ENCODE measurements at regions of chr17 and their contacts with region 1.

Region 1: GRCh38 chr17:79393358-79394202 is 217.3 kb downstream of the RBFOX3 start:
- DNase-seq: peak; percentile 37
- ATAC-seq: peak; percentile 84
- H3K4me3 ChIP-seq: no peak overlapping the region
- H3K27ac ChIP-seq: no peak overlapping the region
- H3K4me1 ChIP-seq: peaks cover 0 to 8% of the 10 kb centered on the region in 2 experiments; a peak in 1 of 4 replicates
- H3K27me3 ChIP-seq: peaks cover 53% of the 10 kb centered on the region
- CTCF ChIP-seq: peak; percentile 92 to 100 (median 99)
- POLR2A ChIP-seq: no peak
- RAD21 ChIP-seq: peak; percentile 94

Region 2: DNA sequence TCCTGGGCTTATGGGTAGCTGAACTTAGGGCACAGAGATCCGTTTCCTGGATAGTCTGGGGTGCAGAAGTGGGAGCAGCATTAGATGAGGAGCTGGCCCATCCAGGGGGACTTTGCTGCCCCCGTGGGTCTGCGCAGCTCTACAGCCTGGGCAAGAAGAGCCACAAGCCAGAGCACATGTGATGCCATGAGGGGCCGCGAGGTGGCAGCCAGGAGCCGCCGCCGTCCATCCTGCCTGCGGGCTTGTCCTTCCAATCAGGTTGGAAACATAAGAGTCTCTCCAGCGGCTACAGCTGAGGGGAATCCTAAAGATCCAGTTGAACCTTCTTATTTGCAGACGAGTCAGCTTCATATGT is 347.8 kb before region 1 on chr17:
- CTCF ChIA-PET with region 1: interaction called, 33 read pairs
- POLR2A ChIA-PET with region 1: no interaction called
- RAD21 ChIA-PET with region 1: interaction called in 1 of 2 experiments, 3 read pairs
- intact Hi-C with region 1: no loop called
- DNase-seq: peak; percentile 54
- ATAC-seq: peak; percentile 89
- H3K4me3 ChIP-seq: no peak overlapping the region
- H3K27ac ChIP-seq: no peak overlapping the region
- H3K4me1 ChIP-seq: peaks cover 0 to 13% of the 10 kb centered on the region in 2 experiments; a peak in 3 of 4 replicates
- H3K27me3 ChIP-seq: no peaks in the 10 kb centered on the region
- CTCF ChIP-seq: peak; percentile 93 to 99 (median 99)
- POLR2A ChIP-seq: no peak
- RAD21 ChIP-seq: peak; percentile 88

Region 3: DNA sequence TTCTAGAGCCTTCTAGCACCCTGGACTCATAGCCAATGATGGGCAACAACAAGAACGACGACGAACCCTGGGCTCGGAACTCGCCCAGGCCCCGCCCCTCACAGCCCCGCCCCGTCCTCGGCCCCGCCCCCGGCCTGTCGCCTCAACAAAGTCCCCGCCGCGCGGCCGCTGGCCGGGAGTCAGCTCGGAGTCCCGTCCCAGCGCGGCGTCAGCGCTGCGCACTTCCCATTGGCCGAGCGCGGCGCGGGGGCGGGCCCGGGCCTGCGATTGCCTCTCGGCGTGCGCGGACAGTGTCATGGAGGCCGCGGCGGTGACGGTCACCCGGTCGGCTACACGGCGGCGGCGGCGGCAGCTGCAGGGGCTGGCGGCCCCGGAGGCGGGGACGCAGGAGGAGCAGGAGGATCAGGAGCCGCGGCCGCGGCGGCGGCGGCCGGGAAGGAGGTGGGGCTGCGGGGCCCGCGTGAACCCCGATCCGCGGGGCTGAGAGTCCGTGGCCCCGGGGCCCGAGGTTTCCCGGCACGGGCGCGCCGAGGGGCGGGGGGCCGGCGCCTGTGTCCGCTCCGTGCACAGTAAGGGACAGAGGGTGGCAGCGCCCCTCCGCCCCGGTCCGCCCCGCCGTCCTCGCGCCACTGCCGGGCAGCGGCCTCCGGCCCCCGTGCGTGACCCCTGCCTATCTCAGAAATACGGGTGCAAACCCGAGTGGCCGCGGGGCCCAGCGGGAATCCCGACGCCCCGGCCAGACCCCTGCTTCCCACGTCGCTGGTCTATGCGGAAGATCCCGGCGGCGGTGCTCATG is 318.7 kb before region 1 on chr17 and contains the start of gene ENGASE:
- CTCF ChIA-PET with region 1: interaction called, 14 read pairs
- POLR2A ChIA-PET with region 1: no interaction called
- RAD21 ChIA-PET with region 1: interaction called in 1 of 2 experiments, 3 read pairs
- intact Hi-C with region 1: no loop called
- DNase-seq: peak; percentile 92
- ATAC-seq: peak; percentile 99
- H3K4me3 ChIP-seq: peak within 1 kb of the TSS; percentile 78 to 91
- H3K27ac ChIP-seq: peak within 1 kb of the TSS; percentile 67
- H3K4me1 ChIP-seq: peaks cover 10 to 22% of the 10 kb centered on the region in 2 experiments; a peak in 3 of 4 replicates
- H3K27me3 ChIP-seq: no peaks in the 10 kb centered on the region
- CTCF ChIP-seq: no peak
- POLR2A ChIP-seq: peak; percentile 38
- RAD21 ChIP-seq: no peak
- total RNA-seq, gene ENGASE: 54.2 TPM

Region 4: GRCh38 chr17:79188048-79188447 is 205.5 kb before region 1 on chr17:
- CTCF ChIA-PET with region 1: interaction called, 116 read pairs
- POLR2A ChIA-PET with region 1: interaction called, 3 read pairs
- RAD21 ChIA-PET with region 1: interaction called, 5 to 17 read pairs
- intact Hi-C with region 1: loop called (anchors 1 kb)
- DNase-seq: peak; percentile 10
- ATAC-seq: peak; percentile 88
- H3K4me3 ChIP-seq: no peak overlapping the region
- H3K27ac ChIP-seq: no peak overlapping the region
- H3K4me1 ChIP-seq: no peaks in the 10 kb centered on the region
- H3K27me3 ChIP-seq: peaks cover 84% of the 10 kb centered on the region
- CTCF ChIP-seq: peak; percentile 81 to 92 (median 89)
- POLR2A ChIP-seq: no peak
- RAD21 ChIP-seq: peak; percentile 91

Region 5: GRCh38 chr17:79372470-79373238 is 20.9 kb before region 1 on chr17:
- CTCF ChIA-PET with region 1: interaction called, 13 read pairs
- POLR2A ChIA-PET with region 1: no interaction called
- RAD21 ChIA-PET with region 1: no interaction called
- intact Hi-C with region 1: no loop called
- DNase-seq: no peak
- ATAC-seq: no peak
- H3K4me3 ChIP-seq: no peak overlapping the region
- H3K27ac ChIP-seq: no peak overlapping the region
- H3K4me1 ChIP-seq: no peaks in the 10 kb centered on the region
- H3K27me3 ChIP-seq: peaks cover 58% of the 10 kb centered on the region
- CTCF ChIP-seq: no peak
- POLR2A ChIP-seq: no peak
- RAD21 ChIP-seq: no peak

Region 6: DNA sequence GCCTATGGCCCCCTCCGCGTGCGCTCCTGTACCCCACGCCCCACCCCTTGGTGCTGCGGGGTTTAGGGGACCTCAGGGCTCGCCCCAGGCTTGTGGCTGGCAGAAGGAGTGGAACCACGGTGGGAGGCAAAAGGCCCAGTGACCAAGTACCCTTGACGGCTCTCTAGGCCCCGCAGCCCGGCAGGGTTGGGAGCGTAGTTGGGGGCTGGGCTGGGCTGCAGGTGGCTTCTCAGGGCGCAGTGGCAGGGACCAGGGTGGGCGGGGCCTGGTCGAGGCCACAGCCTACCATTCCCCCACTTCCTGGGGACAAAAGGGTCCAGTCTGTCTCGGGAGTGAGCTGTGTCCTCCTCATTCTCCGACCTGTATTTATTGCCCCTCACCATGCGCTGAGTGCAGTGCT is 92.4 kb after region 1 on chr17:
- CTCF ChIA-PET with region 1: no interaction called
- POLR2A ChIA-PET with region 1: no interaction called
- RAD21 ChIA-PET with region 1: no interaction called
- intact Hi-C with region 1: no loop called
- DNase-seq: no peak
- ATAC-seq: no peak
- H3K4me3 ChIP-seq: no peak overlapping the region
- H3K27ac ChIP-seq: no peak overlapping the region
- H3K4me1 ChIP-seq: no peaks in the 10 kb centered on the region
- H3K27me3 ChIP-seq: peaks cover 59% of the 10 kb centered on the region
- CTCF ChIP-seq: no peak
- POLR2A ChIP-seq: no peak
- RAD21 ChIP-seq: no peak

Region 7: GRCh38 chr17:79707931-79708891 is 314.6 kb after region 1 on chr17:
- CTCF ChIA-PET with region 1: interaction called, 21 read pairs
- POLR2A ChIA-PET with region 1: no interaction called
- RAD21 ChIA-PET with region 1: interaction called in 1 of 2 experiments, 3 read pairs
- intact Hi-C with region 1: no loop called
- DNase-seq: peak; percentile 34
- ATAC-seq: peak; percentile 80
- H3K4me3 ChIP-seq: no peak overlapping the region
- H3K27ac ChIP-seq: no peak overlapping the region; the same call in 1 of the 2 replicates
- H3K4me1 ChIP-seq: no peaks in the 10 kb centered on the region; a peak in 1 of 4 replicates
- H3K27me3 ChIP-seq: no peaks in the 10 kb centered on the region
- CTCF ChIP-seq: peak; percentile 81 to 86 (median 81)
- POLR2A ChIP-seq: no peak
- RAD21 ChIP-seq: peak; percentile 92